ENCODE measurements at regions of chr3 and their contacts with region 1.

Region 1: GRCh38 chr3:16550676-16551341 is 37.3 kb upstream of the RFTN1 start:
- H3K4me3 ChIP-seq: no peak overlapping the region
- H3K27ac ChIP-seq: no peak overlapping the region
- H3K4me1 ChIP-seq: no peaks in the 10 kb centered on the region
- CTCF ChIP-seq: peak; percentile 85

Region 2: GRCh38 chr3:15443826-15444524 is 1106.8 kb before region 1 on chr3:
- CTCF ChIA-PET with region 1: no interaction called
- POLR2A ChIA-PET with region 1: no interaction called
- H3K4me3 ChIP-seq: no peak overlapping the region
- H3K27ac ChIP-seq: no peak overlapping the region
- H3K4me1 ChIP-seq: no peaks in the 10 kb centered on the region
- CTCF ChIP-seq: no peak

Region 3: GRCh38 chr3:16079519-16079918 is 471.3 kb before region 1 on chr3:
- CTCF ChIA-PET with region 1: no interaction called
- POLR2A ChIA-PET with region 1: no interaction called
- H3K4me3 ChIP-seq: no peak overlapping the region
- H3K27ac ChIP-seq: no peak overlapping the region
- H3K4me1 ChIP-seq: no peaks in the 10 kb centered on the region
- CTCF ChIP-seq: no peak

Region 4: DNA sequence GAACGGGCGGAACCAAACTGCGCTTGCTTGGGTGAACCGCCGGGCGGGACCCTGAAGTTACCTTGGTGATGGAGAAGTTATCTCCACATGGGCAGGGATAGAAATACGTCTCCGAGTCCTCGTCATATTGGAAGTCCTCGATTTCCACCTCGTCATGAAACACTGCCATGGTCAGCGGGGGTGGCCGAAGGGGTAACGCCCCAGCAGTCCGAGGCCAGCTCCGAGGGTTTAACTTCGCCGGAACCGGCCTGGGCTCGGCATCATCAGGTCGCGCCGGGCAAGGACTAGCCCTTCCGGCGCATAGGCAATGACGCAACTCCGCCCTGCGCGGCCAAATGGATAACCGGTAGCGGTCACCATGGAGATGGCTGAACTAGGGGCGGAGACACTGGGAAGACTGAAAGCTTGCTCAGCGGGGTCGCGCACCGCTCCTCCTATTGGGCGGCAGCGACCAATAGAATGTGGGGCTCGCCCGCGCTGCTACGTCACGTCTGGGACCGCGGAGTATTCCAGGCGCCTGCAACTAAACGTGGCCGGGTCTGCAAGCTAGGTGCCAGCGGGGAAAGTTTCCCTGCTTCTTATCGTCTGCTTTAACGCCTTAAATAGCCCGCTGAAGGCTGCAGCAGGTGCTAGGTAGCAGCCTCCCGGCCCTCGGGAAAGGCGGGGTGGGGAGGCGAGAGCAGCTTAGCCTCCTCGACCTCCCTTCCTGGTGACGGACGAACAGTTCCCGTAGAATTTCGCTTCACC is 285.9 kb before region 1 on chr3 and contains the starts of genes DPH3 and OXNAD1:
- CTCF ChIA-PET with region 1: interaction called, 23 read pairs
- POLR2A ChIA-PET with region 1: no interaction called
- H3K4me3 ChIP-seq: peak within 1 kb of the TSS; percentile 93
- H3K27ac ChIP-seq: peak within 1 kb of the TSS; percentile 47; the same call in 1 of the 2 replicates
- H3K4me1 ChIP-seq: no peaks in the 10 kb centered on the region
- CTCF ChIP-seq: 0 out of 2 replicates have a peak, but pooled peaks have one; percentile 24

Region 5: GRCh38 chr3:16378920-16379319 is 171.9 kb before region 1 on chr3:
- CTCF ChIA-PET with region 1: no interaction called
- POLR2A ChIA-PET with region 1: no interaction called
- H3K4me3 ChIP-seq: no peak overlapping the region
- H3K27ac ChIP-seq: no peak overlapping the region
- H3K4me1 ChIP-seq: no peaks in the 10 kb centered on the region
- CTCF ChIP-seq: no peak

Measured in HEK293 (cell line).